ENCODE measurements at regions of chr3 and their contacts with region 1.

Region 1: GRCh38 chr3:46488735-46489361 is 8.9 kb upstream of the RTP3 start:
- DNase-seq: peak; percentile 82
- H3K4me3 ChIP-seq: no peak overlapping the region
- H3K27ac ChIP-seq: no peak overlapping the region
- H3K4me1 ChIP-seq: peaks cover 21% of the 10 kb centered on the region
- H3K27me3 ChIP-seq: no peaks in the 10 kb centered on the region
- CTCF ChIP-seq: peak; percentile 100

Region 2: GRCh38 chr3:46312991-46313390 is 175.9 kb before region 1 on chr3:
- CTCF ChIA-PET with region 1: interaction called, 32 read pairs
- dilution Hi-C with region 1: no loop called
- in situ Hi-C with region 1: no loop called
- intact Hi-C with region 1: no loop called
- DNase-seq: peak; percentile 75
- H3K4me3 ChIP-seq: no peak overlapping the region
- H3K27ac ChIP-seq: no peak overlapping the region
- H3K4me1 ChIP-seq: no peaks in the 10 kb centered on the region
- H3K27me3 ChIP-seq: no peaks in the 10 kb centered on the region
- CTCF ChIP-seq: no peak

Region 3: GRCh38 chr3:46558184-46559043 is 69.6 kb after region 1 on chr3:
- CTCF ChIA-PET with region 1: interaction called, 47 read pairs
- dilution Hi-C with region 1: no loop called
- in situ Hi-C with region 1: no loop called
- intact Hi-C with region 1: loop called (anchors 1 kb)
- DNase-seq: peak; percentile 92
- H3K4me3 ChIP-seq: no peak overlapping the region
- H3K27ac ChIP-seq: no peak overlapping the region
- H3K4me1 ChIP-seq: peaks cover 10% of the 10 kb centered on the region
- H3K27me3 ChIP-seq: no peaks in the 10 kb centered on the region
- CTCF ChIP-seq: peak; percentile 52 to 62

Region 4: DNA sequence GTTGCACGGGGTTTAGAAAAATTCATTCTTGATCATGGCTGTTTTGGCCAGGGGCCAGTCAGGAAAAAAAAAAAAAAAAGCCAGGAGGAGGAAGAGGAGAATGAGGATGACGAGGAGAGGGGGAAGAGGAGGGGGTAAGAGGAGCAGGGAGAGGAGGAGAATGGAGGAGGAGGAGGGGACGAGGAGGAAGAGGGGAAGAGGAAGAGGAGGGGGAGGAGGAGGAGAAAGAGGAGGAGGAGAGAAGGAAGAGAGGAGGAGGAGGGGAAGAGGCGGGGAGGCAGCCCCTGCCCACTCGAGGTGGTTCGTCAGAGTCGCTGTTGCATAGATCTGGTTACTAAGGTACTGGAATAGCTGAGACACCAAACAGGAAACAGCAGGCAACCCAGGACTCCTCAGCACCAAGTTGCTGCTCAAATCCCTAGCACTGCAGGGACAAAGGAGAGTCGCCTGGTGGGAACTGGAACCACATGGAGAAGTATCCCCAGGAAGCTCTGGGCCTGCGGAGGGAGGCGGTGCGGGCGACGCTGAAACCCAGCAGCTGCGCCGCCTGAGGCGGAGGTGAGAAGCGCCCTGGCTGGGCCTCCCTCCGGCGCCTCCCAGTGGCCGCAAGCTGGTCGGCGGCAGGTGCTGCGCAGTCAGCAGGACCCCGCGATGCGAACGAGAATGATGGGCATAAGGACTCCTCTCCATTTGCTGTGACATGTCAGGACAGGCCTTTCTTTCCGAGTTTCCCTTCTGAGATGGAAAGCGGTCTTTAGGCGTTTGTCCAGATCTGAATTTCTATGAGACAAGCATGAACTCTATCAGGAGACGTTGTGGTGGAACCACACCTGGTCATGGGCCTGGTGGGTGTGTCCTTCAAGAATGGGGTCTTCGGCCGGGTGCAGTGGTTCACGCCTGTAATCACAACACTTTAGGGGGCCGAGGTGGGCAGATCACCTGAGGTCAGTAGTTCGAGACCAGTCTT is 141.0 kb after region 1 on chr3:
- CTCF ChIA-PET with region 1: interaction called, 11 read pairs
- dilution Hi-C with region 1: no loop called
- in situ Hi-C with region 1: loop called (anchors 10 to 25 kb)
- intact Hi-C with region 1: loop called (anchors 1 kb)
- DNase-seq: peak; percentile 71
- H3K4me3 ChIP-seq: peak overlapping the region in 1 of 3 experiments; percentile 13
- H3K27ac ChIP-seq: no peak overlapping the region
- H3K4me1 ChIP-seq: peaks cover 9% of the 10 kb centered on the region
- H3K27me3 ChIP-seq: no peaks in the 10 kb centered on the region
- CTCF ChIP-seq: peak; percentile 88 to 99

Region 5: GRCh38 chr3:46663591-46664135 is 174.8 kb after region 1 on chr3:
- CTCF ChIA-PET with region 1: interaction called, 3 read pairs
- dilution Hi-C with region 1: no loop called
- in situ Hi-C with region 1: no loop called
- intact Hi-C with region 1: loop called (anchors 1 kb)
- DNase-seq: no peak
- H3K4me3 ChIP-seq: no peak overlapping the region
- H3K27ac ChIP-seq: no peak overlapping the region
- H3K4me1 ChIP-seq: peaks cover 21% of the 10 kb centered on the region
- H3K27me3 ChIP-seq: no peaks in the 10 kb centered on the region
- CTCF ChIP-seq: peak; percentile 21 to 45

Region 6: GRCh38 chr3:46695177-46695961 is 206.5 kb after region 1 on chr3:
- CTCF ChIA-PET with region 1: interaction called, 4 read pairs
- dilution Hi-C with region 1: no loop called
- in situ Hi-C with region 1: no loop called
- intact Hi-C with region 1: loop called (anchors 2 kb)
- DNase-seq: no peak
- H3K4me3 ChIP-seq: no peak overlapping the region
- H3K27ac ChIP-seq: no peak overlapping the region
- H3K4me1 ChIP-seq: peaks cover 42% of the 10 kb centered on the region
- H3K27me3 ChIP-seq: no peaks in the 10 kb centered on the region
- CTCF ChIP-seq: peak; percentile 34 to 42

Region 7: GRCh38 chr3:46909535-46910442 is 420.9 kb after region 1 on chr3:
- CTCF ChIA-PET with region 1: no interaction called
- dilution Hi-C with region 1: no loop called
- in situ Hi-C with region 1: no loop called
- intact Hi-C with region 1: loop called (anchors 5 kb)
- DNase-seq: peak; percentile 65
- H3K4me3 ChIP-seq: no peak overlapping the region
- H3K27ac ChIP-seq: no peak overlapping the region
- H3K4me1 ChIP-seq: peaks cover 21% of the 10 kb centered on the region
- H3K27me3 ChIP-seq: no peaks in the 10 kb centered on the region
- CTCF ChIP-seq: peak; percentile 87 to 88

Measured in mammary epithelial cell (primary cell).